PC-3 (cell line): ENCODE measurements at regions of chr3 and their contacts with region 1.

Region 1: DNA sequence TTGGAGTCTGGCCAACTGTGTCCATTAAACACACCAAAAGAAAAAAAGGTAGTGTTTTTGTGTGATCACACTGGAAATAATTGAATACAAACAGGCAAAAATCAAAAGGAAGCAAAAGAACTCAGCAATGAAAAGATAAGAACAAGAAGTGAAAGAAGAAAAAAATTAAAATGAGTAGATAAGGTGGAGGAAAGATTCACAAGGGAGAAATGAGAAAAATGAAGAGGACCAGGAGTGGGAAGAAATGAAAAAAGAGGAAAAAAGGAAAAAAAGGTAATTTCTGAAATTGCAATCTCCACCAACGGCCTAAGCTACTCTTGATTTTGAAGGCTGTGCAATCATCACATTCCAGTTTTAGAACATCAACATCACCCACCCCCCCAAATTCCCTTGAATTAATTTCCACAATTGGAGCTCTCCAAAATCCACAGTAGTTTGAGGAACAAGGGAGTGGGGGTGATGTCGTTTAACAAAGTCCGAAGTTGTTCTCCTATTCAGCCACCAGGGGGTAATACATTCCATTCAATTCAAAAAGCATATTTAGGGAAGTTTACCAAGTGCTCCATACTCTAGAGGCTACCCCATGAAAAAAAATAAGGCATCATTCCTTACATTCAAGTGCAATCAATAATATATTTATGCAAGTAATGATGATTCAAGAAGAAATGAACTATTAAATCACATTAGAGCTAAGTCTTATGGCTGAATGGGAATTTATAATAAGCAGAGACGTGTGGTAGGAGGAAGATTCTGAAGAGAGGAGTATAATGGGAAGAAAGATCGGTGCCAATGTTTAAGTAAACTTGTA is 37.4 kb downstream of the ZNF860 start:
- DNase-seq: peak; percentile 78
- ATAC-seq: peak; percentile 73
- H3K4me3 ChIP-seq: peak overlapping the region; percentile 13; the same call in 1 of the 2 replicates
- H3K27ac ChIP-seq: peak overlapping the region; percentile 73
- H3K4me1 ChIP-seq: peaks cover 11% of the 10 kb centered on the region
- H3K27me3 ChIP-seq: no peaks in the 10 kb centered on the region
- CTCF ChIP-seq: peak; percentile 91

Region 2: DNA sequence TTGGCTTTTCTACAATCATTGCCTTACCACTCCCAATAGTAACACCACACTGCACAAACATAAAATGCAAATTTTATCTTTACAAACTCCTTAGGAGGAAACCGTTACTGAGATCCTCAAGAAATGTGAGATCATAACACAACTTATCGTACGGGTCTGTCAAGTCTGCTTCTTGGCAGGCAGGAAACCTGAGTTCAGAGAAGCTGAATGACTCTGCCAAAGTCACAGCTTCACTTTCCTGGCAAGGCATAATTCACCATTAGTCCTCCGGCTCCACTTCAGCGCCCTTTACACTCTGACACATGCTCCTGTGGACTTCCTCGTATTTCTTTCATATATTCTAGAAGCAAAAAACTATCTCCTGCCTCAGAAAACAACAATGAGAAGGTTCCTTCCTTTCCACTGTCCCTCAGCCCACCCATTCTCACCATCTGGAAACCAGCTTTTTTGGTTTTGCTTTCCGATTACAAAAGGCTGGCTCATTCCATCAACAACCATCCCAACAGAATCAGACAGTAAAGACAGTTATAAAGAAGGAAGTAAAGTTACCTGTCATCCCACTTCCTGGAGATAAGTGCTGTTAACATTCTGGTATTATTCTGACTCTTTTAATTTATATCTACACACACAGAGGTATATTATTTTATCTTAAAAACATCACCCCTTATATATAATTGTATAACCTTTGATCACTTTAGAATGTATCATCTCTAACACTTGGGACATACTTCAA is 262.9 kb before region 1 on chr3:
- CTCF ChIA-PET with region 1: no interaction called
- POLR2A ChIA-PET with region 1: interaction called, 13 read pairs
- intact Hi-C with region 1: no loop called
- DNase-seq: no peak
- ATAC-seq: no peak
- H3K4me3 ChIP-seq: no peak overlapping the region
- H3K27ac ChIP-seq: no peak overlapping the region
- H3K4me1 ChIP-seq: no peaks in the 10 kb centered on the region
- H3K27me3 ChIP-seq: no peaks in the 10 kb centered on the region
- CTCF ChIP-seq: no peak

Region 3: GRCh38 chr3:31958701-31959152 is 60.2 kb before region 1 on chr3:
- CTCF ChIA-PET with region 1: no interaction called
- POLR2A ChIA-PET with region 1: no interaction called
- intact Hi-C with region 1: no loop called
- DNase-seq: peak; percentile 35
- ATAC-seq: no peak
- H3K4me3 ChIP-seq: no peak overlapping the region
- H3K27ac ChIP-seq: no peak overlapping the region
- H3K4me1 ChIP-seq: peaks cover 42% of the 10 kb centered on the region
- H3K27me3 ChIP-seq: no peaks in the 10 kb centered on the region
- CTCF ChIP-seq: no peak

Region 4: DNA sequence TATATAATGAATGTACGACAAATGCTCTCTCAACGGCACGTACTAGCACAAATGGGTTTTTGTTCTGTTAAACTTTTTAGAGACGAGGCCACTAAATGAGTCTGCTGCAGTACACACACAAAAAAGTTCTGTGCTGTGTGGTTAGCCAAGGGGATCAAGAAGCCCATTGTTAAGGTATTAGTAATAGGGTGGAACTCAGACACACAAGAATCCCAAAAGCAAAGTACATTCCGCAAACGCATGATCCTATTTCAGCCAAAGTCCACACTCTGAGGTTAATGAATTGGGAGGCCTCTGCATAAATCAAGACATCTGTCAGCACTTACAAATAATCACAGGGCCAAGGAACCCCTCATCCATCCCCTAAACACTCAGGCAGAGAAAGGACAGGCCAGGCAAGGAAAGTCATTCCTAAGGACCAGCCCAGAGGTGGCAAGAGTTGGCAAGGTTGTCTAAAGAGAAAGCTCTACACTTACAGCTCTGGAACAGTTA is 50.0 kb before region 1 on chr3:
- CTCF ChIA-PET with region 1: no interaction called
- POLR2A ChIA-PET with region 1: interaction called, 11 read pairs
- intact Hi-C with region 1: loop called (anchors 1 kb)
- DNase-seq: peak; percentile 97
- ATAC-seq: peak; percentile 90
- H3K4me3 ChIP-seq: peak overlapping the region; percentile 52
- H3K27ac ChIP-seq: peak overlapping the region; percentile 92
- H3K4me1 ChIP-seq: peaks cover 45% of the 10 kb centered on the region
- H3K27me3 ChIP-seq: no peaks in the 10 kb centered on the region
- CTCF ChIP-seq: no peak

Region 5: GRCh38 chr3:32045091-32045964 is 26.4 kb after region 1 on chr3:
- CTCF ChIA-PET with region 1: interaction called, 4 read pairs
- POLR2A ChIA-PET with region 1: no interaction called
- intact Hi-C with region 1: loop called (anchors 2 kb)
- DNase-seq: peak; percentile 92
- ATAC-seq: peak; percentile 87
- H3K4me3 ChIP-seq: peak overlapping the region; percentile 31
- H3K27ac ChIP-seq: peak overlapping the region; percentile 91
- H3K4me1 ChIP-seq: peaks cover 27% of the 10 kb centered on the region
- H3K27me3 ChIP-seq: no peaks in the 10 kb centered on the region
- CTCF ChIP-seq: no peak

Region 6: GRCh38 chr3:32106280-32106928 is 87.4 kb after region 1 on chr3 and contains the start of gene GPD1L:
- CTCF ChIA-PET with region 1: interaction called, 6 read pairs
- POLR2A ChIA-PET with region 1: no interaction called
- intact Hi-C with region 1: loop called (anchors 1 kb)
- DNase-seq: peak; percentile 98
- ATAC-seq: peak; percentile 90
- H3K4me3 ChIP-seq: peak within 1 kb of the TSS; percentile 93
- H3K27ac ChIP-seq: peak within 1 kb of the TSS; percentile 86
- H3K4me1 ChIP-seq: peaks cover 51% of the 10 kb centered on the region
- H3K27me3 ChIP-seq: no peaks in the 10 kb centered on the region
- CTCF ChIP-seq: no peak
- total RNA-seq, gene GPD1L: 33.7 and 42.8 TPM in 2 replicates

Region 7: DNA sequence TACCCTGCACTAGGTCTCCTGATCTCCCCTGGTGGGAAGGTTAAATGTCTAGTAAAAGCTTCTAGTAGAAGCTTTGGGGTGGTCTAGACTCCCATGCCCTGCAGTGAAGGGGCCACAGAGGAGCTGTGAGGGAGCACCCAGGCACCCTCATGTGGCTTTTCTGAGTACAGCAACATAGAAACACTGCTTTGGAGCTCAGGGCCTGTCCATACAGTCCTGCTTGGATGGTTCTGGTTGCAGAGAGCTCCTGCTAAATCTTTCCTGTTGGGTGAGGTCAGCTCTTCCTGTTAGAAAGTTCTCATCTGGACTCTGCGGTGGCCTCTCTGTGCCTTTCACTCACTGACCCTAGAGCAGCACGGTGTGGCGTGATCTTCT is 135.2 kb after region 1 on chr3:
- CTCF ChIA-PET with region 1: interaction called, 15 read pairs
- POLR2A ChIA-PET with region 1: no interaction called
- intact Hi-C with region 1: no loop called
- DNase-seq: peak; percentile 30
- ATAC-seq: peak; percentile 93
- H3K4me3 ChIP-seq: no peak overlapping the region
- H3K27ac ChIP-seq: no peak overlapping the region
- H3K4me1 ChIP-seq: peaks cover 7% of the 10 kb centered on the region; the same call in 1 of the 2 replicates
- H3K27me3 ChIP-seq: no peaks in the 10 kb centered on the region
- CTCF ChIP-seq: peak; percentile 65